HepG2 (cell line): ENCODE measurements at regions of chr21 and their contacts with region 1.

Region 1: DNA sequence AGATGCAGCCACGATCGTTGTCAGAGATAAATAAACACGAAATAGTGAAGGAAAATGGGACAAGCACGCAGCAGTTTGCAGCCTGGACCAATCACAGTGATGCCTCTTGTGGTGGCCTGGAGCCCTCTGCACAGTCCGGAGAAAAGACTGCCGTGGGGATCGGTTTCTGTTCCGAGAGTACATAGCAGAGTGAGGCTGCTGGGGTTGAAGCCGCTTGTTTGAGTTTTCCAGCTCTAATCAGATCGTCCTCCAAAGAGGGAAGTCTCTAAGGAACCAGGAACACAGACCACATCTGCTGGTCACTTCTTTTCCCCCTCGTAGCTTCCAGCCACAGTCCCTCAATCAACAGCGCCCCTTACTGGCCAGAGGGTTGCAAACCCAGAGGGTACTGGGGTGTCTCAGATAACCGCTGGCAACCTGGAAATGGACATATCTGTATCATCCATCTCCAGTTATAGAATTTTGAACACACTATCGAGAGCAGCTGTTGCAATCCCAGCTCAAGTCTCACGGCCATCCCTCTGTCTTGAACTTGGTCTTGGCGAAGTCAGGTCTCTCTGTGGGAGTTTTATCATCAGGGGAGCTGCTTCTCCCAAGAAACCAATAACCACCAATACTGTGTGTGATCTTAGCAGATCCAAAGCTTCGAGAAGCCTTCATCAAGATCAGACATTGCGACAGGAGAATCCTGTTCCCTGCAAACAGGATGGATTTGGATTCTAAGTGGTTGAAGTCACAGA is 57.4 kb downstream of the OLIG1 start:
- DNase-seq: peak; percentile 56
- ATAC-seq: peak; percentile 86
- H3K4me3 ChIP-seq: peak overlapping the region in 2 of 3 experiments; percentile 37 to 55; a peak in 4 of 6 replicates
- H3K27ac ChIP-seq: no peak overlapping the region
- H3K4me1 ChIP-seq: peaks cover 21% of the 10 kb centered on the region
- H3K27me3 ChIP-seq: peaks cover 4 to 23% of the 10 kb centered on the region in 2 experiments; a peak in 3 of 5 replicates
- CTCF ChIP-seq: peak; percentile 78
- EP300 ChIP-seq: no peak
- POLR2A ChIP-seq: no peak
- RAD21 ChIP-seq: peak; percentile 67

Region 2: DNA sequence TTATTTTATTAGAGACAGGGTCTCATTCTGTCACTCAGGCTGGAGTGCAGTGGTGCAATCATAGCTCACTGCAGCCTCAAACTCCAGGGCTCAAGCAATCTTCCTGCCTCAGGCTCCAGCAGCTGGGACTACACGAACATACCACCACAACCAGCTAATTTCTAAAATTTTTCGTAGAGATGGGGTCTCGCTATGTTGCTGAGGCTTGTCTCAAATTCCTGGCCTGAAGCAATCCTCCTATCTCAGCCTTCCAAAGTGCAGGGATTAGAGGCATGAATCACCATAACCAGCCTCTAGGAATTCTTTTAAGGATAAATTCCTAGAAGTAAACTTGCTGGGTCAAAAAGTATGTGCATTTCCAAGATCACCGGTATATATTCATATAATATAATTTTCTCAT is 1272.2 kb before region 1 on chr21:
- CTCF ChIA-PET with region 1: no interaction called
- POLR2A ChIA-PET with region 1: no interaction called
- in situ Hi-C with region 1: no loop called
- intact Hi-C with region 1: loop called (anchors 10 kb)
- DNase-seq: no peak
- ATAC-seq: no peak
- H3K4me3 ChIP-seq: no peak overlapping the region
- H3K27ac ChIP-seq: no peak overlapping the region
- H3K4me1 ChIP-seq: no peaks in the 10 kb centered on the region
- H3K27me3 ChIP-seq: no peaks in the 10 kb centered on the region
- CTCF ChIP-seq: no peak
- EP300 ChIP-seq: no peak
- POLR2A ChIP-seq: no peak
- RAD21 ChIP-seq: no peak

Region 3: GRCh38 chr21:32844653-32845436 is 282.5 kb before region 1 on chr21:
- CTCF ChIA-PET with region 1: no interaction called
- POLR2A ChIA-PET with region 1: no interaction called
- in situ Hi-C with region 1: no loop called
- intact Hi-C with region 1: loop called (anchors 10 kb)
- DNase-seq: no peak
- ATAC-seq: no peak
- H3K4me3 ChIP-seq: no peak overlapping the region
- H3K27ac ChIP-seq: no peak overlapping the region
- H3K4me1 ChIP-seq: no peaks in the 10 kb centered on the region
- H3K27me3 ChIP-seq: peaks cover 0 to 27% of the 10 kb centered on the region in 2 experiments; a peak in 2 of 5 replicates
- CTCF ChIP-seq: no peak
- EP300 ChIP-seq: no peak
- POLR2A ChIP-seq: no peak
- RAD21 ChIP-seq: no peak

Region 4: GRCh38 chr21:32994305-32994704 is 133.0 kb before region 1 on chr21:
- CTCF ChIA-PET with region 1: interaction called, 19 read pairs
- POLR2A ChIA-PET with region 1: no interaction called
- in situ Hi-C with region 1: loop called (anchors 5 kb)
- intact Hi-C with region 1: loop called (anchors 1 kb)
- DNase-seq: no peak
- ATAC-seq: 0 out of 3 replicates have a peak, but pooled peaks have one; percentile 37
- H3K4me3 ChIP-seq: no peak overlapping the region
- H3K27ac ChIP-seq: no peak overlapping the region
- H3K4me1 ChIP-seq: no peaks in the 10 kb centered on the region
- H3K27me3 ChIP-seq: peaks cover 0 to 5% of the 10 kb centered on the region in 2 experiments; a peak in 1 of 5 replicates
- CTCF ChIP-seq: peak; percentile 44
- EP300 ChIP-seq: no peak
- POLR2A ChIP-seq: no peak
- RAD21 ChIP-seq: no peak

Region 5: DNA sequence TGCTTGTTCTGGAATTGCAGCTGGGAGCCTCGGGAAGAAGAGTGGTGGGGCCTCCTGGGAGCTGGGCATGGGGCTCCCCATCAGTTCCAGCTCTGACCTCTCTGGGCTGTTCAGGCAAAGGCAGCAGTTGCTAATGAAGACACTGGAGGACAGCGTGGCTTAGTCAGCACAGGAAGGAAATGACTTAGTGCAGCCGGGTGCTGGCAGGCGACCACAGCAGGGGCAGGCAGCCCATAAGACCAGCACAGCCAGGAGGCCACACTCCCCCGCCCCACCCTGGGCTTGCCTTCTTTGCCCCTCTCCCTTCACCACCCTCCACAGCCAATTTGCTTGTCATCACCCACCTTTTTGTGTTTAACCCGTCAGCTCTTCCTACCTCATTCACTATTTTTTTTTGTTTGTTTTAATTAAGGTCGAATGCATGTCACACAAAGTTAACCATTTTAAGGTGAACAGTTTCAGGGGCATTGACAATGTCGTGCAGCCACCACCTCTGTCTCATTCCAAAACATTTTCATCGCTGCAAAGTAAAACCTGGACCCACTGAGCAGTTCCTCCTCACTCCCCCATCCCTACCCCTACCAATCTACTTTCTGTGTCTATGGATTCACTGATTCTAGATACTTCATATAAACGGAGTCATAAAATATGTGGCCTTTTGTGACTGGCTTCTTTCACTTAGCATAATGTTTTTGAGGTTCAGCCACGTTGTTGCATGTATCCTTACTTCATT is 90.7 kb before region 1 on chr21:
- CTCF ChIA-PET with region 1: no interaction called
- POLR2A ChIA-PET with region 1: no interaction called
- in situ Hi-C with region 1: no loop called
- intact Hi-C with region 1: no loop called
- DNase-seq: no peak
- ATAC-seq: no peak
- H3K4me3 ChIP-seq: no peak overlapping the region
- H3K27ac ChIP-seq: no peak overlapping the region
- H3K4me1 ChIP-seq: no peaks in the 10 kb centered on the region
- H3K27me3 ChIP-seq: peaks cover 3 to 40% of the 10 kb centered on the region in 2 experiments
- CTCF ChIP-seq: no peak
- EP300 ChIP-seq: no peak
- POLR2A ChIP-seq: no peak
- RAD21 ChIP-seq: no peak

Region 6: GRCh38 chr21:33449616-33450015 is 322.3 kb after region 1 on chr21:
- CTCF ChIA-PET with region 1: no interaction called
- POLR2A ChIA-PET with region 1: no interaction called
- in situ Hi-C with region 1: no loop called
- intact Hi-C with region 1: loop called (anchors 5 kb)
- DNase-seq: no peak
- ATAC-seq: no peak
- H3K4me3 ChIP-seq: no peak overlapping the region
- H3K27ac ChIP-seq: no peak overlapping the region
- H3K4me1 ChIP-seq: peaks cover 14% of the 10 kb centered on the region
- H3K27me3 ChIP-seq: no peaks in the 10 kb centered on the region
- CTCF ChIP-seq: no peak
- EP300 ChIP-seq: no peak
- POLR2A ChIP-seq: no peak
- RAD21 ChIP-seq: no peak